ENCODE measurements at regions of chr7 and their contacts with region 1.

Region 1: GRCh38 chr7:130473289-130473688 is 18.6 kb upstream of the MEST start:
- DNase-seq: no peak
- H3K4me3 ChIP-seq: no peak overlapping the region
- H3K27ac ChIP-seq: no peak overlapping the region
- H3K4me1 ChIP-seq: no peaks in the 10 kb centered on the region
- H3K27me3 ChIP-seq: no peaks in the 10 kb centered on the region
- CTCF ChIP-seq: no peak

Region 2: GRCh38 chr7:130379921-130380860 is 93.1 kb before region 1 on chr7 and contains the start of gene CPA1:
- CTCF ChIA-PET with region 1: no interaction called
- dilution Hi-C with region 1: loop called (anchors 5 kb)
- in situ Hi-C with region 1: no loop called
- intact Hi-C with region 1: no loop called
- DNase-seq: no peak
- H3K4me3 ChIP-seq: no peak within 1 kb of the TSS
- H3K27ac ChIP-seq: no peak within 1 kb of the TSS
- H3K4me1 ChIP-seq: no peaks in the 10 kb centered on the region
- H3K27me3 ChIP-seq: no peaks in the 10 kb centered on the region
- CTCF ChIP-seq: no peak
- total RNA-seq, gene CPA1: 0.67 TPM in 1 of 2 donors, not detected in the other

Region 3: DNA sequence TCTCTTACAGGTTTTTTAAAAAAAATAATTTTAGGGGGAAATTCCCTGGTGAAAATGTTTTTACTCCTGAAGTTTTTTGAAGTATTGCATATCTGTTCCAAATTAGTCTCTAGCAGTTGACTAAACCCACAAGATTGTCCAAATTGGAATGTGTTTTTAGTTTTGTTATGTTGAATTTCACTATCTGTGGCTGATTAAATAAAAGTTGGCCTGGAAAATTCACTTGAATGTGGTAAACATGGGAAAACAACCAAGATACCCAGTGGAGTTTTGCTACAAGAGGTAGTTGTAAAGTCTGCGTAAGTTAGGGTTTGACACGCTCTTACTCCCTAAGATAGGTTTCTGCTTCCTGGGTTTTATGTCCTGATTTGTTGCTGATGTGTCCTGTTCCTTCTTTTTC is 209.7 kb after region 1 on chr7:
- CTCF ChIA-PET with region 1: no interaction called
- dilution Hi-C with region 1: no loop called
- in situ Hi-C with region 1: no loop called
- intact Hi-C with region 1: no loop called
- DNase-seq: no peak
- H3K4me3 ChIP-seq: no peak overlapping the region
- H3K27ac ChIP-seq: no peak overlapping the region
- H3K4me1 ChIP-seq: no peaks in the 10 kb centered on the region
- H3K27me3 ChIP-seq: peaks cover 6% of the 10 kb centered on the region
- CTCF ChIP-seq: no peak

Measured in mammary epithelial cell (primary cell).